Activated CD8-positive, alpha-beta T cell treated with anti-CD3 and anti-CD28 coated beads for 36 hours (primary cell): ENCODE measurements at regions of chr1 and their contacts with region 1.

Region 1: GRCh38 chr1:41416552-41417334 is 55.5 kb downstream of the FOXO6 start:
- DNase-seq: peak; percentile 65
- ATAC-seq: peak; percentile 79
- H3K4me3 Mint-ChIP-seq: no peak overlapping the region
- H3K27ac Mint-ChIP-seq: no peak overlapping the region
- H3K4me1 Mint-ChIP-seq: no peaks in the 10 kb centered on the region
- H3K27me3 Mint-ChIP-seq: peaks cover 9% of the 10 kb centered on the region
- CTCF ChIP-seq: peak; percentile 94

Region 2: DNA sequence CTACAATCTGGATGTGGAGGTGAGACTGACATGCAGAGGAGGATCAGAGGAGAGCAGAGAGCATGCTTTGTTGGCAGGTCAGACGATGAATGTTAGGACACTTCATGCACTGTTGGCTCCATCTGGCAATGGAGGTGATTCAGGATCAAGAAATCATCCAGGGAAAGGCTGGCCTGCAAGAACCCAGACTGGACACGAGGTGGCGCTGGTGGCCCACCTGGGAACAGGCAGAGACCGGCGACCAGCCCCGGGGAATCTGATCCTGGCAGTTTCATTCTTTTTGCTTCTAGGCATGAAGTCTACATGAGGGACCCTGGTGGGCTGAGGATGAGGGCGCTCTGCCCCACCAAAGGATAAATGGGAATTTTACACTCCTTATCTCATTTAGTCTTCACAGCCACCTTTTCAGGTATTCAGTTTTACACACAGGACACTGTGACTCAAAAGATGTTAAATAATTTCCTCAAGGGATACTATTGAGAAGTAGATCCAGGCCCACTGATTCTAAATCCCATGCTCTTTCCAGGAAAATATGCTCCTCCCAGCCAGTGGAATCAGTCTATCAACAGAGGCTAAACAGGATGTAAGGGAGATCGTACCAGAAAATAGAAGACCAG is 148.5 kb before region 1 on chr1:
- CTCF ChIA-PET with region 1: interaction called, 6 read pairs
- POLR2A ChIA-PET with region 1: no interaction called
- intact Hi-C with region 1: loop called (anchors 2 kb)
- DNase-seq: peak; percentile 68
- ATAC-seq: peak; percentile 74
- H3K4me3 Mint-ChIP-seq: no peak overlapping the region
- H3K27ac Mint-ChIP-seq: no peak overlapping the region
- H3K4me1 Mint-ChIP-seq: no peaks in the 10 kb centered on the region
- H3K27me3 Mint-ChIP-seq: no peaks in the 10 kb centered on the region
- CTCF ChIP-seq: peak; percentile 99

Region 3: GRCh38 chr1:41322835-41323627 is 93.7 kb before region 1 on chr1:
- CTCF ChIA-PET with region 1: interaction called, 24 read pairs
- POLR2A ChIA-PET with region 1: interaction called, 3 read pairs
- intact Hi-C with region 1: loop called (anchors 5 kb)
- DNase-seq: peak; percentile 60
- ATAC-seq: peak; percentile 81
- H3K4me3 Mint-ChIP-seq: no peak overlapping the region
- H3K27ac Mint-ChIP-seq: no peak overlapping the region
- H3K4me1 Mint-ChIP-seq: no peaks in the 10 kb centered on the region
- H3K27me3 Mint-ChIP-seq: no peaks in the 10 kb centered on the region
- CTCF ChIP-seq: peak; percentile 48

Region 4: DNA sequence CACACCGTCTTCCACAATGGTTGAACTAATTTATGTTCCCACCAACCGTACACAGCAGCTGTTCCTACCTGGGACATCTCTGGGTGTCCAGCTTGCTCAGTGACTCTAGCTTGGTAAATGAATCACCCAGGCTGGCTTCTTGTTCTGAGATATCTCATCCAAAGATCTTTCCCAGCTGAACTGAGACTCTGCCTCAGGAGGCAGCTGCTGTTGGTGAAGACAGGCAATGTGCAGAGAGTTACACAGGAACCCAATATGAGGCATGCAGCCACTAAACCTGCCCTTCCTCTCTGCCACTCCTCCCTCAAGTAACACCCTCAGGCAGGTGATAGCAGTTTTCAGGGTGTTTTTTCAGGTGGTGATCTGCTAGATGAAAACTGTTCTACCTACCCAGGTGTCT is 69.5 kb before region 1 on chr1:
- CTCF ChIA-PET with region 1: no interaction called
- POLR2A ChIA-PET with region 1: no interaction called
- intact Hi-C with region 1: no loop called
- DNase-seq: no peak
- ATAC-seq: no peak
- H3K4me3 Mint-ChIP-seq: no peak overlapping the region
- H3K27ac Mint-ChIP-seq: no peak overlapping the region
- H3K4me1 Mint-ChIP-seq: peaks cover 17% of the 10 kb centered on the region
- H3K27me3 Mint-ChIP-seq: peaks cover 11% of the 10 kb centered on the region
- CTCF ChIP-seq: no peak

Region 5: DNA sequence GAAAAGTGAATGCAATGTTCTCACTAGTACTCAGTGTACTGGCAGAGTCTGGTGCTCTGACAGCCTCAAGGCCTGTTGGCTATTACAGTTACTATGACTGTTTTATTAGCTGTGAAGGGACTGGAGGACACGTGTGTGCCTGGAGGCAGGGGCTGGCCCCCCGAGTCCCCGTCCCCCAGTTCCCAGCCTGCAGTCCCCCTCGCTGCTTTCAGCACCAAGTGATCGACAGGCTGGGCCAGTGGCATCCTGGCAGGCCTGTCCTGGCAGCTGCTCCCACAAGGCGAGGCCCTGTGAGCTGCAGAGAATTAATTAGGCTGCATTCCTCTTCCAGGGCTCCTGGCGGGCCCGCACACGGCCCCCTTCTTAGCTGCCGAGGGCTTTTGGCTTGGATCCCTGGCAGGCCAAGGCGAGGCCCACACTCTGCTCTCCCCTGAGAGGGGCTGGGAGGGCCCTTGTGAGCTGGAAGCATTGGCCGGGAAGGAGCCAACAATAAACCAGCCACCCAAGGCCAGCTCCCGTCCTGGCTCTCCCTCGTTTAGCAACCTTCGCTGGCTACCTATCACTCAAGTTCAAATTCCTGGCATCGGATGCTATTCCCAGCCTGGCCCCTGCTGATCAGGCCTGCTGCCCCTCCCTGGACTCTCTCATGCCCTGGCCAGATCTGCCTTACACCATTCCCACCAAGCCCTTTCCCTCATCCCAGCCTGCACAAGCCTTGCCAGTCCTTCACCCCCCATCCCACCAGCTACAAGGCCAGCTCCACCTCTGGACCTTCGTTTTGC is 57.9 kb after region 1 on chr1:
- CTCF ChIA-PET with region 1: no interaction called
- POLR2A ChIA-PET with region 1: no interaction called
- intact Hi-C with region 1: no loop called
- DNase-seq: no peak
- ATAC-seq: no peak
- H3K4me3 Mint-ChIP-seq: no peak overlapping the region
- H3K27ac Mint-ChIP-seq: no peak overlapping the region
- H3K4me1 Mint-ChIP-seq: no peaks in the 10 kb centered on the region
- H3K27me3 Mint-ChIP-seq: no peaks in the 10 kb centered on the region
- CTCF ChIP-seq: no peak

Region 6: GRCh38 chr1:41573785-41574713 is 157.3 kb after region 1 on chr1:
- CTCF ChIA-PET with region 1: no interaction called
- POLR2A ChIA-PET with region 1: no interaction called
- intact Hi-C with region 1: no loop called
- DNase-seq: peak; percentile 91
- ATAC-seq: peak; percentile 95
- H3K4me3 Mint-ChIP-seq: no peak overlapping the region
- H3K27ac Mint-ChIP-seq: peak overlapping the region; percentile 51
- H3K4me1 Mint-ChIP-seq: peaks cover 33% of the 10 kb centered on the region
- H3K27me3 Mint-ChIP-seq: no peaks in the 10 kb centered on the region
- CTCF ChIP-seq: peak; percentile 93